CD4-positive, alpha-beta memory T cell (primary cell): ENCODE measurements at regions of chr18 and their contacts with region 1.

Region 1: GRCh38 chr18:267688-268552 is at the start of gene THOC1:
- DNase-seq: peak; percentile 92 to 96 (median 93)
- H3K4me3 ChIP-seq: peak within 1 kb of the TSS; percentile 92 to 99
- H3K4me3 Mint-ChIP-seq: peak within 1 kb of the TSS; percentile 95 to 100 (median 98)
- H3K27ac ChIP-seq: peak within 1 kb of the TSS; percentile 99
- H3K27ac Mint-ChIP-seq: peak within 1 kb of the TSS; percentile 99 to 100 (median 100)
- H3K4me1 ChIP-seq: peaks cover 24% of the 10 kb centered on the region
- H3K4me1 Mint-ChIP-seq: peaks cover 17 to 47% (median 30%) of the 10 kb centered on the region in 4 donors
- H3K27me3 ChIP-seq: no peaks in the 10 kb centered on the region
- H3K27me3 Mint-ChIP-seq: no peaks in the 10 kb centered on the region
- total RNA-seq, gene THOC1: 65.9 to 69.9 TPM

Region 2: GRCh38 chr18:158128-159036 is 109.5 kb before region 1 on chr18 and contains the start of gene USP14:
- CTCF ChIA-PET with region 1: no interaction called
- POLR2A ChIA-PET with region 1: interaction called, 34 read pairs
- intact Hi-C with region 1: loop called (anchors 1 kb)
- DNase-seq: peak; percentile 93 to 98 (median 96)
- H3K4me3 ChIP-seq: peak within 1 kb of the TSS; percentile 18 to 81
- H3K4me3 Mint-ChIP-seq: peak within 1 kb of the TSS; percentile 88 to 98 (median 96)
- H3K27ac ChIP-seq: peak within 1 kb of the TSS; percentile 81
- H3K27ac Mint-ChIP-seq: peak within 1 kb of the TSS; percentile 91 to 98 (median 95)
- H3K4me1 ChIP-seq: peaks cover 29% of the 10 kb centered on the region
- H3K4me1 Mint-ChIP-seq: peaks cover 18 to 35% (median 29%) of the 10 kb centered on the region in 4 donors
- H3K27me3 ChIP-seq: no peaks in the 10 kb centered on the region
- H3K27me3 Mint-ChIP-seq: no peaks in the 10 kb centered on the region
- total RNA-seq, gene USP14: 42.6 to 43.6 TPM

Region 3: DNA sequence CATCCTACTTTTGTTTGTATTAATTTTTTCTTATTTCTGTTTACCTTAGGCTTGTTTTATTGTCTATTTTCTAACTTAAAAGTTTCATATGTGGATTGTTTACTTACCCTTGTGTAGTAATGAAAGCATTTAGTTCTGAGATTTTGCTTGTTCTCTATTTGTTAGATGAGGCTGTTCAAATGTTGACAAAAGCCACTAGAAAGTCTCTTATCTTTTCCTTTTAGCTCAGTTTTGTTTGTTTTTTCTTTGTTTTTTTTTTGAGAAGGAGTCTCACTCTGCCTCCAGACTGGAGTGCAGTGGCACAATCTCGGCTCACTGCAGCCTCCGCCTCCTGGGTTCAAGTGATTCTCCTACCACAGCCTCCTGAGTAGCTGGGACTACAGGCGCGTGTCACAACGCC is 78.7 kb before region 1 on chr18:
- CTCF ChIA-PET with region 1: no interaction called
- POLR2A ChIA-PET with region 1: no interaction called
- intact Hi-C with region 1: no loop called
- DNase-seq: no peak
- H3K4me3 ChIP-seq: no peak overlapping the region
- H3K4me3 Mint-ChIP-seq: no peak overlapping the region
- H3K27ac ChIP-seq: no peak overlapping the region
- H3K27ac Mint-ChIP-seq: peak overlapping the region in 1 of 7 donors; percentile 25
- H3K4me1 ChIP-seq: no peaks in the 10 kb centered on the region
- H3K4me1 Mint-ChIP-seq: peaks cover 11 to 26% (median 19%) of the 10 kb centered on the region in 4 donors
- H3K27me3 ChIP-seq: no peaks in the 10 kb centered on the region
- H3K27me3 Mint-ChIP-seq: no peaks in the 10 kb centered on the region

Region 4: GRCh38 chr18:616380-616995 is 348.6 kb after region 1 on chr18:
- CTCF ChIA-PET with region 1: no interaction called
- POLR2A ChIA-PET with region 1: no interaction called
- intact Hi-C with region 1: loop called (anchors 10 kb)
- DNase-seq: peak in 4 of 5 donors; percentile 19 to 28 (median 25)
- H3K4me3 ChIP-seq: no peak overlapping the region
- H3K4me3 Mint-ChIP-seq: no peak overlapping the region
- H3K27ac ChIP-seq: no peak overlapping the region
- H3K27ac Mint-ChIP-seq: no peak overlapping the region
- H3K4me1 ChIP-seq: no peaks in the 10 kb centered on the region
- H3K4me1 Mint-ChIP-seq: no peaks in the 10 kb centered on the region
- H3K27me3 ChIP-seq: no peaks in the 10 kb centered on the region
- H3K27me3 Mint-ChIP-seq: peaks cover 3 to 5% of the 10 kb centered on the region in 2 donors

Region 5: DNA sequence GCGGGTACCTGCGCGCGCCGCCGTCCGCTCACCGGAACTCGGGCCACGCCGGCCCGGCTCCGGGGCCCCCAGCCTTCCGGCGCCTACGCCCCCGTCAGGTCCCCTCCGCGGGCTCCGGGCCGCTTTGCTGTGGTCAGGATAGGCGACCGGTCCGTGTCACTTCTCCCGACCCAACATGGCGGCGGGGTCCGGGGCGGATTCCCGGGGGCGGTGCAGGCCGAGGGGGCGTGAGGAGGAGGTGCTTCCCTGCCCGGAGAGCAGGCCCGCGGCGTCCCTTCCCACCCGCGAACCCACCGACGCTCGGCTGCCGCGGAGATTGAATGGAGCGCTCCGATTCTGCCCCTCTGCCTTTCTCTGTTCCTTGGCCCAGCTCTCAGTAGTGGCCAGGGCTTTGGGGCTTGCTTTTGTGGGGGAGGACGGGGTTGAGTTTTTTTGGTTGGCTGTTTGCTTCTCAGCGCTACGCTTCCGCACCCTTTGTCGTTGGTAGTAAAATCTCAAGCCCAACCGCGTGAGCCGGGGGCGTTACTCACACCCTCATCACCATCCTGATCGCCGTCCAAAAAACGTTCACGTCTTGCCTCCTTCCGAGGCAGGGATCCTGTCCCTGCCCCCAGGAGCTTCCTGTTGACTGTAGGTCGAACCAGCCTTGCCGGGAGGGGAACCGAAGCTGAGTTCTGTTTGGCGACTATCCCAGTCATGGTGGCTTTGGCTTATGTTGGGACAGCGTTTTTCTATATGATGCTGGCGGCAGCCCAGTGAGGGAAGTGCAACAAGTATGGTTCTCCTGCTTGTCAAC is 544.7 kb after region 1 on chr18:
- CTCF ChIA-PET with region 1: no interaction called
- POLR2A ChIA-PET with region 1: no interaction called
- intact Hi-C with region 1: loop called (anchors 2 kb)
- DNase-seq: peak; percentile 80 to 86 (median 81)
- H3K4me3 ChIP-seq: peak overlapping the region; percentile 64 to 76
- H3K4me3 Mint-ChIP-seq: peak overlapping the region; percentile 83 to 97 (median 94)
- H3K27ac ChIP-seq: peak overlapping the region; percentile 80
- H3K27ac Mint-ChIP-seq: peak overlapping the region; percentile 97 to 99 (median 98)
- H3K4me1 ChIP-seq: peaks cover 58% of the 10 kb centered on the region
- H3K4me1 Mint-ChIP-seq: peaks cover 40 to 58% (median 50%) of the 10 kb centered on the region in 4 donors
- H3K27me3 ChIP-seq: no peaks in the 10 kb centered on the region
- H3K27me3 Mint-ChIP-seq: peaks cover 0 to 5% of the 10 kb centered on the region in 2 donors